ENCODE measurements at regions of chr5 and their contacts with region 1.

Region 1: DNA sequence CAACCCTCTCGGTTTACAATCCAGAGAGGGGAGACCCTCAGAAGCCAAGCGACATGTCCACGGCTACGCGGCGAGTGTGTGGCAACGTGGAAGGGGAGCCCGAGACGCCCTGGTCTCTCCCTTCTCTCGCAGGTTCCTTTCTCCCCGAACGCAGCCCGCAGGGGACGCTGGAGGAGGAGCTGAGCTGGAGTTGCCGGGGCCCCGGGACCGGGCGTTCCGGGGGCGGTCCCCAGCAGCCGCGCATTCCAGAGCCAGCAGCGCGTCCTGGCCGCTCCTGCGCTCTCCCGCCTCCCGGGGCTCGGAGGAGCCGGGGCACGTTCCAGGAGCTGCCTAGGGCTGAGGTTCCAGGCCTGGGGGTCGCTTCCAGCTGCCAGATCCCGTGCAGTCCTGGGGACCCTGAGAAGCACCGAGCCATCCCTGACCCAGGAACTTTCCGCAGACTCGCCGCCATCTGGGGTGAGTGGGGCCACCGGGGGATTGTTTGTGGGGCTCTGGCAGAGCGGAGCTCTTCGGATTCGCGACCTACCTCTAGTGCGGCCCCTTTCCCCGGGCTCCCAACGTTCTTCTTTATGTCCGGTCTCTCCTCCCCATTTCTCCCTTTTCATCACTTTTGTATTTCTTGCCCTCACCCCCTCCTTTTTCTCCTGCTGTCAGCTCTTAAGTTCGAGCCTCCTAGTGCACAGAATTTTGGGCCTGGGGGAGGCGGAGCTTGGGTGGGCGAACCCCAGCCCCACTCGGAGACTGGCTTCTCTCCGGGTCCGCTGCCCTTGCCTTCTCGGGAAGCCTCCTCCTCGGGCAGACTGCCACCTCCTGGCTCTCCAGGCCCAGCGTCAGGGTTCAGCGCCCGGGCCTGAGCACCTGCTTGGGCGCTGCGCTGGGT is at the start of gene SMIM3:
- DNase-seq: peak; percentile 53 to 84 (median 68)
- ATAC-seq: peak; percentile 63
- H3K4me3 ChIP-seq: peak within 1 kb of the TSS; percentile 96
- H3K4me3 Mint-ChIP-seq: peak within 1 kb of the TSS; percentile 99
- H3K27ac ChIP-seq: peak within 1 kb of the TSS; percentile 62 to 70
- H3K27ac Mint-ChIP-seq: peak within 1 kb of the TSS; percentile 90
- H3K4me1 ChIP-seq: peaks cover 56% of the 10 kb centered on the region
- H3K4me1 Mint-ChIP-seq: peaks cover 58% of the 10 kb centered on the region
- H3K27me3 ChIP-seq: no peaks in the 10 kb centered on the region
- H3K27me3 Mint-ChIP-seq: no peaks in the 10 kb centered on the region
- CTCF ChIP-seq: peak; percentile 41
- total RNA-seq, gene SMIM3: 2.9 TPM

Region 2: GRCh38 chr5:150486402-150487198 is 292.2 kb before region 1 on chr5:
- CTCF ChIA-PET with region 1: no interaction called
- POLR2A ChIA-PET with region 1: no interaction called
- intact Hi-C with region 1: no loop called
- DNase-seq: peak; percentile 7 to 71 (median 28)
- ATAC-seq: peak; percentile 46
- H3K4me3 ChIP-seq: peak overlapping the region; percentile 59
- H3K4me3 Mint-ChIP-seq: peak overlapping the region; percentile 79
- H3K27ac ChIP-seq: no peak overlapping the region
- H3K27ac Mint-ChIP-seq: no peak overlapping the region
- H3K4me1 ChIP-seq: peaks cover 14% of the 10 kb centered on the region
- H3K4me1 Mint-ChIP-seq: peaks cover 11% of the 10 kb centered on the region
- H3K27me3 ChIP-seq: no peaks in the 10 kb centered on the region
- H3K27me3 Mint-ChIP-seq: peaks cover 21% of the 10 kb centered on the region
- CTCF ChIP-seq: no peak

Region 3: DNA sequence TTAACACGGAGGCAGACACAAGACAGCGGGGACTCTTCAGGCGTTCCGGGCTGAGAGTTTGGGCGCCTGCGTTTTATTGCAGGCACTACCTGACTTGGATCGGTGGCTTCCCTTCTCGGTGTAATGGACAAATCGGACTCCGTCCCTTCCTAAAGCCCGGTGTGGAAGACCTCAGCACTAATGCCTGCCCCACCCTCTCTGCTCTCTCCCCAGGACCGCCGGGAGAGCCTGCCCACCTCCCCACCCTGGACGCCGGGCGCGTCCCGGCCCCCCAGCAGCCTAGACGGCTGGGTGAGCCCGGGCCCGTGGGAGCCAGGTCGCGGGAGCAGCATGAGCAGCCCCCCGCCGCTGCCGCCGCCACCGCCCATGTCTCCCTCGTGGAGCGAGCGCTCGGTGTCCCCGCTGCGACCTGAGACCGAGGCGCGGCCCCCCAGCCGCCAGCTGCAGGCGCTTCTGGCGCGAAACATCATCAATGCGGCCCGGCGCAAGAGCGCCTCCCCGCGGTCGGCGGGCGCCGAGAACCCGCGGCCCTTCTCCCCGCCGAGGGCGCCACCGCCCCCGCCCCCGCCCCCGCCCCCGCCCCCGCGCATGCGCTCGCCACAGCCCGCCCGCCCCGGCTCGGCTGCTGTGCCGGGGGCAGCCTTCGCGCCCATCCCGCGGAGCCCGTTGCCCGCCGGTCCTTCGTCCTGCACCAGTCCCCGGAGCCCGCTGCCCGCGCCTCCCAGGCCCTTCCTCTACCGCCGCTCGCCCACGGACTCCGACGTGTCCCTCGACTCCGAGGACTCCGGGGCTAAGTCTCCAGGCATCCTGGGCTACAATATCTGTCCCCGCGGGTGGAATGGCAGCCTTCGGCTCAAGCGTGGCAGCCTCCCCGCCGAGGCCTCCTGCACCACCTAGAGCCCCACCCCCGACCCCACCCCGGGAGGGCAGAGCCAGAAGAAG is 122.3 kb before region 1 on chr5:
- CTCF ChIA-PET with region 1: no interaction called
- POLR2A ChIA-PET with region 1: no interaction called
- intact Hi-C with region 1: loop called in 1 of 2 experiments (anchors 5 kb)
- DNase-seq: peak; percentile 67 to 92 (median 80)
- ATAC-seq: peak; percentile 94
- H3K4me3 ChIP-seq: peak overlapping the region; percentile 68
- H3K4me3 Mint-ChIP-seq: peak overlapping the region; percentile 85
- H3K27ac ChIP-seq: no peak overlapping the region
- H3K27ac Mint-ChIP-seq: no peak overlapping the region
- H3K4me1 ChIP-seq: peaks cover 15% of the 10 kb centered on the region
- H3K4me1 Mint-ChIP-seq: peaks cover 10% of the 10 kb centered on the region
- H3K27me3 ChIP-seq: no peaks in the 10 kb centered on the region
- H3K27me3 Mint-ChIP-seq: no peaks in the 10 kb centered on the region
- CTCF ChIP-seq: peak; percentile 47

Region 4: GRCh38 chr5:150789943-150790611 is 11.3 kb after region 1 on chr5:
- CTCF ChIA-PET with region 1: interaction called, 9 read pairs
- POLR2A ChIA-PET with region 1: interaction called, 10 read pairs
- intact Hi-C with region 1: no loop called
- DNase-seq: peak; percentile 23 to 83 (median 52)
- ATAC-seq: peak; percentile 96
- H3K4me3 ChIP-seq: no peak overlapping the region
- H3K4me3 Mint-ChIP-seq: peak overlapping the region; percentile 59
- H3K27ac ChIP-seq: no peak overlapping the region
- H3K27ac Mint-ChIP-seq: peak overlapping the region; percentile 64
- H3K4me1 ChIP-seq: peaks cover 20% of the 10 kb centered on the region
- H3K4me1 Mint-ChIP-seq: peaks cover 55% of the 10 kb centered on the region
- H3K27me3 ChIP-seq: no peaks in the 10 kb centered on the region
- H3K27me3 Mint-ChIP-seq: no peaks in the 10 kb centered on the region
- CTCF ChIP-seq: no peak

Region 5: DNA sequence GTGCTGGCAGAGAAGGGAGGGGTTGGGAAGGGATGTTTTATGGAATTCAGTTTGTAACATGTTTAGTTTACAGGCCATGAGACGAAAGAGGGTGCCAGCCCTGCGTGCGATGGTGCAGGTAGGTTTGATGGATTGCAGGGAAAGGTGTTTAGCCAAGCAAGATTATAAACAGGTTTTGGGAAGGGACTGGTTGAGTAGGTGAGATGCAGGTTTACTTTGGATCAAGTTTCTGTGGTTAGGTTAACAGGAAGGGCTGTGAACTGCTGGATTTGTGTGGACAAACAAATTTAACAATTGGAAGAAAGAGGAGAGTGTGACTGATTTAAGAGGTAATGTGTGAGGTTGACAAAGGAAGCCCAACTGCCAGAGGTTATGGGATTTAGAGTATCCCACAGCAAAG is 209.0 kb after region 1 on chr5:
- CTCF ChIA-PET with region 1: no interaction called
- POLR2A ChIA-PET with region 1: no interaction called
- intact Hi-C with region 1: no loop called
- DNase-seq: no peak
- ATAC-seq: no peak
- H3K4me3 ChIP-seq: no peak overlapping the region
- H3K4me3 Mint-ChIP-seq: no peak overlapping the region
- H3K27ac ChIP-seq: no peak overlapping the region
- H3K27ac Mint-ChIP-seq: no peak overlapping the region
- H3K4me1 ChIP-seq: no peaks in the 10 kb centered on the region
- H3K4me1 Mint-ChIP-seq: no peaks in the 10 kb centered on the region
- H3K27me3 ChIP-seq: no peaks in the 10 kb centered on the region
- H3K27me3 Mint-ChIP-seq: peaks cover 4% of the 10 kb centered on the region
- CTCF ChIP-seq: no peak